ENCODE measurements at regions of chr1 and their contacts with region 1.

Region 1: DNA sequence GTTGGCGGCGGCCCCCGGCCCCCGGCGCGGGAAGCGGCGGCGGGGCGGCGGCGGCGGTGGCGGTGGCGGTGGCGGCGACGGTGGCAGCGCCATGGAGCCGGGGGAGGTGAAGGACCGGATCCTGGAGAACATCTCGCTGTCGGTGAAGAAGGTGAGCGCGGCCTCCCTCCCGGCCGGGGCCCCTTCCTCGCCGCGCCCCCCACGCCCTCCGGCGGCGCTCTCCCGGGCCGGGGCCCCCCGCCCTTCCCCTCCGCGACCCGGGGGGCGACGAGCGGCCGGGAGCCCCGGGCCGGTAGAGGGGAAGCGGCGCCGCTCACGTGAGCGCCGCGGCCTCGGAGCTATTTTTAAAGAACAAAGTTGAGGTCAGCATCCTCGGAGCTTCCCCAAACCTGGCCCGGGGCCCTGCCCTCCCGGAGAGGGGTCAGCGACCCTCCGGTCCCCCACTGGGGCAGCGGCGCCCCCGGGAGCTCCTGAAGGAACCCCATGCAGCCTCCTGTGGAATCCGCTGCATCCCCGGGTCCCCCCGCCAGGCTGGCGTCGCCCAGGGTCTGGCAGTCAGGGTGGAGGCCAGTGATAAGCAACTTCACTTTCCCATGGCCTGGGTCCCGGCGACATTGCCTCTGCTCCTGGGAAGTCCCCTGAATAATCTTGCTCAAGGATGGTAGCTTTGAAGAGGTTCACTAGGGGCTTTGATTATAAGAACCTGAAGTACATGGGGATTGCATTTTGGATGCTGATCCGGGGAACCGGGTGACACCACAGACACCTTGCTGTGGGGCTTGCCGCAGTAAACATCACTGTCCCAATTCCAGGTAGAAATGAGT is 560 bp downstream of the PLEKHM2 start:
- DNase-seq: peak in 6 of 7 donors; percentile 44 to 57 (median 52)
- H3K4me3 ChIP-seq: peak overlapping the region; percentile 37 to 69 (median 53)
- H3K27ac ChIP-seq: peak overlapping the region; percentile 47 to 96 (median 92)
- H3K4me1 ChIP-seq: peaks cover 9 to 18% of the 10 kb centered on the region in 2 donors
- H3K27me3 ChIP-seq: no peaks in the 10 kb centered on the region
- CTCF ChIP-seq: peak in 3 of 6 experiments; percentile 17 to 42 (median 37)
- POLR2A ChIP-seq: no peak

Region 2: DNA sequence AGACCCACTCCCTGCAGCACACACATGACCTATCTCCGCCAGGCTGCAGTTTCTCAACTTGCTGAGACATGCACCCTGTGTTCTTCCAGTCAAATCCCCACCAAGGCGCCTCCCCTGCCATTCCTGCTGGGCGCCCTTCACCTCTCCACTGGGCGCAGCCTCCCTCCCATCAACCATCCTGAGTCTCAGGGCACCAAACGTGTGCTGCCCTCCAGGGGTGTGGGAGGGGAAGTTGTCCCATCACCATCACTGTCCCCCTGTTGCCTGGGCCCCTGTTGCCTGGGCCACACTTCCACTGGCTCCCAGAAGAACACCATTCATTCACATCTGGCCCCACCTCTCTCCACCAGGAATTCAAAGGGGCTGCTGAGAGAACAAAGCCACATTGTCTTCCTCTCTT is 319.9 kb before region 1 on chr1:
- intact Hi-C with region 1: no loop called
- DNase-seq: no peak
- H3K4me3 ChIP-seq: no peak overlapping the region
- H3K27ac ChIP-seq: no peak overlapping the region
- H3K4me1 ChIP-seq: no peaks in the 10 kb centered on the region
- H3K27me3 ChIP-seq: no peaks in the 10 kb centered on the region
- CTCF ChIP-seq: no peak
- POLR2A ChIP-seq: no peak

Region 3: GRCh38 chr1:15454256-15454655 is 230.4 kb before region 1 on chr1:
- intact Hi-C with region 1: no loop called
- DNase-seq: no peak
- H3K4me3 ChIP-seq: no peak overlapping the region
- H3K27ac ChIP-seq: no peak overlapping the region
- H3K4me1 ChIP-seq: peaks cover 0 to 7% of the 10 kb centered on the region in 2 donors
- H3K27me3 ChIP-seq: no peaks in the 10 kb centered on the region
- CTCF ChIP-seq: no peak
- POLR2A ChIP-seq: no peak

Region 4: GRCh38 chr1:15736038-15736889 is 51.6 kb after region 1 on chr1 and contains the start of gene SLC25A34:
- intact Hi-C with region 1: loop called in 1 of 2 experiments (anchors 5 kb)
- DNase-seq: peak; percentile 77 to 90 (median 86)
- H3K4me3 ChIP-seq: no peak within 1 kb of the TSS
- H3K27ac ChIP-seq: peak within 1 kb of the TSS; percentile 28 to 88 (median 60)
- H3K4me1 ChIP-seq: peaks cover 18 to 32% of the 10 kb centered on the region in 2 donors
- H3K27me3 ChIP-seq: no peaks in the 10 kb centered on the region
- CTCF ChIP-seq: no peak
- POLR2A ChIP-seq: peak in 1 of 2 donors; percentile 37
- total RNA-seq, gene SLC25A34: 0.44 to 12.3 (median 5.5) TPM

Measured in adrenal gland (tissue), 19 donors.